Activated CD4-positive, alpha-beta T cell treated with anti-CD3 and anti-CD28 coated beads for 36 hours (primary cell): ENCODE measurements at regions of chr6 and their contacts with region 1.

Region 1: DNA sequence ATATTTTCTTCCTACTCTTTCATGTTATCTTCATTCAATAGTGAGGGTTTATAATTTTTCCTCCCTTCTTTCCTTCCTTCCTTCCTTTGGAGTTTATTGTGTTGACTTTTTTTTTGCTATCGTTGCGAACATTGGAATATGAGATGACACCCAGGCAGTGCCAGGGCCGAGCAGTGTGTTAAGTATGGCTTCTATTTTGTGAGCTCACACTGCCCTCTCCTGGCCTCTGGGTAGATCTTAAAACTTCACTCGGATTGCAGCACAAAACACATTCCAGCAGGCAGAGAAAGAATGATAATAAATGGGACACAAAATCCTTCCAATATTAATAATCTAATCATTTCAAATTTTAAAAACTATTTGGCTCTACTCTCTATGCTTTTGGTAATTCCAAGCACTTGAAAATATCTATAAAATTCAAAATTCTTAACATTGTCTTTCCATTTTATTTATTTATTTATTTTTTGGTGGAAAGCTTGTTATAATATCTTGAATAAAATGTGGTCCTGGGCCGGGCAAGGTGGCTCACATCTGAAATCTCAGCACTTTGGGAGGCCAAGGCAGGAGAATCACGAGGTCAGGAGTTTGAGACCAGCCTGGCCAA is 147.4 kb upstream of the OLIG3 start:
- DNase-seq: peak; percentile 81
- ATAC-seq: peak; percentile 77
- H3K4me3 Mint-ChIP-seq: no peak overlapping the region
- H3K27ac Mint-ChIP-seq: no peak overlapping the region
- H3K4me1 Mint-ChIP-seq: peaks cover 13% of the 10 kb centered on the region
- H3K27me3 Mint-ChIP-seq: peaks cover 10% of the 10 kb centered on the region

Region 2: GRCh38 chr6:136967876-136968752 is 673.5 kb before region 1 on chr6:
- CTCF ChIA-PET with region 1: no interaction called
- POLR2A ChIA-PET with region 1: no interaction called
- intact Hi-C with region 1: loop called in 1 of 2 experiments (anchors 2 kb)
- DNase-seq: peak; percentile 81
- ATAC-seq: peak; percentile 83
- H3K4me3 Mint-ChIP-seq: no peak overlapping the region
- H3K27ac Mint-ChIP-seq: no peak overlapping the region
- H3K4me1 Mint-ChIP-seq: no peaks in the 10 kb centered on the region
- H3K27me3 Mint-ChIP-seq: peaks cover 23% of the 10 kb centered on the region

Region 3: DNA sequence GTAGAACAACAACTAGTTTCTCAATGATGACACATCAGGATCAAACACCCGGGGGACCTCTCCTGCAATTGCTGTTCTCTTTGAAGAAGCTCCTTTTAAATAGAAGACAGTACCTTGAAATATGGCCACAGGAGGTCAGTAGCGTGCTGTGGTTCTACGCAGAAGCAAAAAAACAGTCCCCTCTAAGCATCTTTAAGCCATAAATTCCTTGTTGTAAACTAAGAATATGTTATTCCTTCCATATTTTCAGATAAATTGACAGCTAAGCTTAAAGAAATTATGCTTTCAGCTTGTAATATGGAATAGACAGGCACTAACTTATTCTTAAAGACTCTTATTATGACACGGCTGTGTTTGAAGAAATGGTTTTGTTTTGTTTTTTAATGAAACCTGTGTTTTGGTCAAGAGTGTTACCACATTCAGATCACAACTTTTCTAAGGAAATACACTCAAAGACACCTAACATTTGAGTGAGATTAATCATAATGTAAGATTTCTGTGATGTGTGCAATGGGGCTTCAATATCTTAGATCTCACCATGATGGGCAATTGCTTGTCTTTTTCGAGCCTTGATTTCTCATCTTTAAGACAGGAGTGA is 547.1 kb before region 1 on chr6:
- CTCF ChIA-PET with region 1: no interaction called
- POLR2A ChIA-PET with region 1: no interaction called
- intact Hi-C with region 1: loop called (anchors 1 to 2 kb)
- DNase-seq: peak; percentile 73
- ATAC-seq: peak; percentile 76
- H3K4me3 Mint-ChIP-seq: no peak overlapping the region
- H3K27ac Mint-ChIP-seq: no peak overlapping the region
- H3K4me1 Mint-ChIP-seq: peaks cover 17% of the 10 kb centered on the region
- H3K27me3 Mint-ChIP-seq: peaks cover 2% of the 10 kb centered on the region

Region 4: DNA sequence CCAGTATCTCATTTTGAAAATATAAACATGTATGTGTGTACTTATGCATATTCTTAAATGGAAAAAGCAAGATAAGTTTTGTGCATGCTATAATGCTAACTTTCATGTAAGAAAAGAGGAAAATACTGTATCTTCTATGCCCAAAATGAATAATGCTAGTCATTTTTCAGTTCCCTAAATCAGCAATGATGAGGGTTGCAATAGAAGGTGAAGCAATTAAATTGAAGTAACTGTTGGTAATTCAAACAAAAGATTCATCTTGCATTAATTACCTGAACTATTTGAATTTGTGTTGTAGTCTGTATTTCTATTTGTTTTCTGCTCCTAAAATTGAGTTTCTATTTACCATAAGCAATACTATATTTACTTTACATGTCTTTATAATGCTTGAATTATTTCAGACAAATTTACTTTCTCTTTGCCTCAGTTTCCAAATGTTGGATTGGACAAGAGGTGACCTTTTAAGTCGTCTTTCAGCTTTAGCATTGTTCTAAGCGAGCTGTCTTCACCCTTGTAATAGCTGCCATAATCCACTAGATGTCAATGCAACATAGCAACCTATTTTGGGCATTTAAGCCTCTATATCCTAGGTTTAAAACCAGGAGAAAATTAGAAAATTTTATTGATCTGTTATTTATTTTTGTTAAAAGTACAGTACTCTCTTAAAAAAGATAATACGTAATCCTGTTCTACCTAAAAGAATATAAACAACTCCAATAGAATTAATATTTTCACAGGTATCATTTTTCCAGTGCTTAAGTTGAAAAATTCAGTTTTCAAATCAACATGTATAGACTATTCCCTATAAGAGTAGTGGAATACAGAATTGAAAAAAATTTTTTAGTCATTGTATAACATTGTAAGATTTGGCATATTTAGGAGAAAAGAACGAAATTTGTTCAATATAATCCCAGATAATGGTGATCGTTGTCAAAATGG is 370.1 kb before region 1 on chr6:
- CTCF ChIA-PET with region 1: no interaction called
- POLR2A ChIA-PET with region 1: no interaction called
- intact Hi-C with region 1: loop called (anchors 1 kb)
- DNase-seq: no peak
- ATAC-seq: peak; percentile 51
- H3K4me3 Mint-ChIP-seq: no peak overlapping the region
- H3K27ac Mint-ChIP-seq: no peak overlapping the region
- H3K4me1 Mint-ChIP-seq: peaks cover 3% of the 10 kb centered on the region
- H3K27me3 Mint-ChIP-seq: peaks cover 8% of the 10 kb centered on the region

Region 5: GRCh38 chr6:137415127-137415833 is 226.3 kb before region 1 on chr6:
- CTCF ChIA-PET with region 1: no interaction called
- POLR2A ChIA-PET with region 1: no interaction called
- intact Hi-C with region 1: loop called in 1 of 2 experiments (anchors 1 kb)
- DNase-seq: peak; percentile 77
- ATAC-seq: peak; percentile 95
- H3K4me3 Mint-ChIP-seq: peak overlapping the region; percentile 65
- H3K27ac Mint-ChIP-seq: peak overlapping the region; percentile 58
- H3K4me1 Mint-ChIP-seq: peaks cover 12% of the 10 kb centered on the region
- H3K27me3 Mint-ChIP-seq: peaks cover 2% of the 10 kb centered on the region

Region 6: GRCh38 chr6:137589067-137589848 is 52.3 kb before region 1 on chr6:
- CTCF ChIA-PET with region 1: no interaction called
- POLR2A ChIA-PET with region 1: no interaction called
- intact Hi-C with region 1: loop called in 1 of 2 experiments (anchors 1 kb)
- DNase-seq: peak; percentile 71
- ATAC-seq: peak; percentile 100
- H3K4me3 Mint-ChIP-seq: no peak overlapping the region
- H3K27ac Mint-ChIP-seq: no peak overlapping the region
- H3K4me1 Mint-ChIP-seq: peaks cover 6% of the 10 kb centered on the region
- H3K27me3 Mint-ChIP-seq: peaks cover 9% of the 10 kb centered on the region